AG04449 (cell line): ENCODE measurements at regions of chr3 and their contacts with region 1.

Region 1: GRCh38 chr3:25094932-25095685 is 333.0 kb upstream of the RARB start:
- DNase-seq: no peak
- H3K4me3 ChIP-seq: no peak overlapping the region
- CTCF ChIP-seq: no peak

Region 2: DNA sequence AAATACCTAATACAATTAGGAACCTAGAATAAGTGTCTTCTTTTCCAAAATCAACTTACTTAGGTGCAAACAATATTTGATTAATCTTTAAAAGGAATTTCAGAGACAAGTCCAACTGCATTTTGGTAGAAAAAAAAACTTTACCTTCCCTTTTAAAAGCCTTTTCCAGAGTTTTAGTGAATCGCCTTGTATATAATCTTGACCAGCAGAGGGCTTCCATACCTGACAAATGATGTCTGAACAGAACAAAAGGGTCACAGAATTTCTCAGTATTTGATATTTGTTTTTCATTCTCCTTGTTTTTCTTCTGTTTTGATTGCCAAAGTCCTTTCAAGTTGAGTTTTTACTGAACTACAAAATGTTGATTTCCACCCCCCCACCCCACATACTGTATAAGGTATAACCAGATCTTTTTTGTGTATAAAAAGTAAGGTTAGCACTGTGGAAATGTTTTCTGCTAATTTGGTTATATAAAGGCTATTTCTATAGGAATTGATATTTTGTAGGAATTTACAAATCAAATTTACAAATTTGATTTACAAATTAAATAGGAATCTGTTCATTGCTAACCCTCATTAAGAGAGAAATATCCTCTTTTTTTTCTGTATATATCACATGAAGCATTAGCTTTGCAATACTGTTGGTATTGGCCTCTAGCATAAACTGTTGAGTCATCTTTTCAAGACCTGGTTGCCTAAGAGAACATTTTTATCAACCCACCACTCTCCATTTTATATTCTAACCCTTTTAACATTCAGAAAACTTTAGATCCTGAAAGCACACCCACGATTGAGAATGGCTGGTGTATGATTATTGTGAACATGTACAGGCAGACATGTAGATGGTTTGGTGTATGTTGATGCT is 131.1 kb before region 1 on chr3:
- CTCF ChIA-PET with region 1: interaction called, 13 read pairs
- POLR2A ChIA-PET with region 1: no interaction called
- DNase-seq: no peak
- H3K4me3 ChIP-seq: no peak overlapping the region
- CTCF ChIP-seq: peak; percentile 49

Region 3: DNA sequence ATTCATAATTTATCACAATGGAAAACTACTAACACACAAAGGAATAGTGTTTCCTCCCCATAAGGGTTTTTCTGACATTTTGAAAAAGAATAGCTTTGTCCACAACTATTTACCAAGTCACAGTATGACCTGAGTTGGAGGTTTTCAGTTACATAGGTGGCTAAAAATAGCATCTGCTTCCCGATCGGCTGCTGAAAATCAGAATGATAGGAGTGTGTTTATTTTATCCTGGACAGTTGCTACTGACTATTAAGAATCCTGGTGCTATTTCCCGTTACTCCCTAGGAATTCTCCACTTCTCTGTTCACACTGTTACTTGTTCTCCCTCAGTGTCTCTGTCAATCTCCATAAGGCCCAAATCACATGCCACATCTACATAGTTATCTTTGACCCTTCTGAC is 21.0 kb before region 1 on chr3:
- CTCF ChIA-PET with region 1: no interaction called
- POLR2A ChIA-PET with region 1: no interaction called
- DNase-seq: no peak
- H3K4me3 ChIP-seq: no peak overlapping the region
- CTCF ChIP-seq: no peak

Region 4: DNA sequence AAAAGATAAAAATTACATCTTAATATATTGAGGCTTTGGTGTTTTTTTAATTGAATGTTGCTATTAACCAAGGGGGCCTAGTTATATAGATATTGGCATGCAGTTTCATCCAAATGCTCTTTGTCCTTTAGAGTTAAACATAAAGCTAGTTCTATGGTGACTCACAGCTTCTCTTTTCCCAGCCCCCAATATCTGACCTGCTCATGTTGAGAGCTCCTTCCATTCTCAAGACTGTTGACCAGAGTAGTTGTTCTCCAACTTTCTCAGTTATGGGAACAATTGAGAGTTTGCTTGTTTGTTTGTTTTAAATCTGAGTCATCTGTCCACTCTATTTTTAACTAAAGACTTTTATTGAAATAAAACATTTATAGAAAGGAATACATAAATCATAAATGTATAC is 317.2 kb after region 1 on chr3:
- CTCF ChIA-PET with region 1: no interaction called
- POLR2A ChIA-PET with region 1: no interaction called
- DNase-seq: no peak
- H3K4me3 ChIP-seq: no peak overlapping the region
- CTCF ChIP-seq: no peak